ENCODE measurements at regions of chr6 and their contacts with region 1.

Region 1: DNA sequence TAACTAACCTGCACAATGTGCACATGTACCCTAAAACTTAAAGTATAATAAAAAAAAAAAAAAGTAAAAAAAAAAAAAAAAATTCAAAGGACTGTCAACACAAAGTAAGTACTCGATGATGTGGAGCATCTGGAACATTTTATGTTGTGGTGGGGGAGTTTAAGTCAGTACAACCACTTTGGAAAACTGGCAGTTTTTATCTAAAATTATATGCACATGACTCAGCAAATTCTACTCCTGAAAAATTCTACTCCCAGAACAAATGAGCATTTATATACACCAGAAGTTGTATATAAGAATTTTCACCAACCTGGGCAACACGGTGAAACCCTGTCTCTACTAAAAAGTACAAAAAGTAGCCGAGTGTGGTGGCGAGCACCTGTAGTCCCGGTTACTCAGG is 36.9 kb upstream of the CCDC28A start:
- DNase-seq: no peak
- ATAC-seq: no peak
- H3K4me3 ChIP-seq: no peak overlapping the region
- H3K27ac ChIP-seq: no peak overlapping the region
- H3K4me1 ChIP-seq: no peaks in the 10 kb centered on the region
- H3K27me3 ChIP-seq: no peaks in the 10 kb centered on the region
- CTCF ChIP-seq: no peak

Region 2: DNA sequence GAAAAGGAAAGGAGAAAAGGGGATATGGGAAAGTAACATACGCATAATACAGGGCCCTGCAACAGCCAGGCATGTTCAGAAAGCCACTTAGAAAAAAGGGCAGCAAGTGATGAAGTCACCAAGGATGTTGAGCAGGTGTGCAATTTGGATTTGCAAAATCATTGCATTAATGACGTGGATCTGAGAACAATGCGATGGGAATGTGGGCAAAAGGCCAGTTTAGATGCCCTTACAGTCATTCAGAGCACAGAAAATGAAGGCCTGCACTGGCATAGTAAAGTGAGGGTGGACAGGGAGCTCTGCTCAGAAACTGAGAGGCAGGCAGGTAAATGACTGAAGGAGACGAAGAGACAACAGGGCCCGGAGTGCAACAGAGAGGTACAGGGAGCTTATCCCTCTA is 113.7 kb before region 1 on chr6:
- CTCF ChIA-PET with region 1: no interaction called
- POLR2A ChIA-PET with region 1: interaction called, 11 read pairs
- in situ Hi-C with region 1: no loop called
- intact Hi-C with region 1: no loop called
- DNase-seq: no peak
- ATAC-seq: no peak
- H3K4me3 ChIP-seq: no peak overlapping the region
- H3K27ac ChIP-seq: no peak overlapping the region
- H3K4me1 ChIP-seq: no peaks in the 10 kb centered on the region
- H3K27me3 ChIP-seq: no peaks in the 10 kb centered on the region
- CTCF ChIP-seq: no peak

Region 3: GRCh38 chr6:138726066-138726758 is 10.4 kb before region 1 on chr6:
- CTCF ChIA-PET with region 1: no interaction called
- POLR2A ChIA-PET with region 1: interaction called, 10 read pairs
- in situ Hi-C with region 1: no loop called
- intact Hi-C with region 1: no loop called
- DNase-seq: no peak
- ATAC-seq: no peak
- H3K4me3 ChIP-seq: no peak overlapping the region
- H3K27ac ChIP-seq: no peak overlapping the region
- H3K4me1 ChIP-seq: 0 out of 2 replicates have a peak, but pooled peaks cover 3% of the 10 kb centered on the region
- H3K27me3 ChIP-seq: no peaks in the 10 kb centered on the region
- CTCF ChIP-seq: no peak

Region 4: GRCh38 chr6:138943089-138943625 is 206.5 kb after region 1 on chr6:
- CTCF ChIA-PET with region 1: no interaction called
- POLR2A ChIA-PET with region 1: no interaction called
- in situ Hi-C with region 1: no loop called
- intact Hi-C with region 1: no loop called
- DNase-seq: no peak
- ATAC-seq: no peak
- H3K4me3 ChIP-seq: no peak overlapping the region
- H3K27ac ChIP-seq: no peak overlapping the region
- H3K4me1 ChIP-seq: no peaks in the 10 kb centered on the region; the same call in 1 of the 2 replicates
- H3K27me3 ChIP-seq: no peaks in the 10 kb centered on the region
- CTCF ChIP-seq: no peak